ENCODE measurements at regions of chr3 and their contacts with region 1.

Region 1: DNA sequence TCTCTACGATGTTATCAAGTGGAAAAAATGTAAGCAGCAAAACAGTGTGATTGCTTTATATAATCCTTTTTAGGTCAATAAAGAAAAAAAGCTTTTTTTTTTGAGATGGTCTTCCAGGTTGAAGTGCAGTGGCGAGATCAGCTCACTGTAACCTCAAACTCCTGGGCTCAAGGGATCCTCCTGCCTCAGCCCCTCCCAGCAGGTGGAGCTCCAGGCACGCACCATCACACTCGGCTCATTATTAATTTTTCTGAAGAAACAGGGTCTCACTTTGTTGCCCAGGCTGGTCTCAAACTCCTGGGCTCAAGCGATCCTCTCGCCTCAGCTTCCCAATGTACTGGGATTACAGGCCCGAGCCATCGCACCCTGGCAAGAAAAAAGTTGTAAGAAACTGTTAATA is 17.3 kb downstream of the RNF168 start:
- DNase-seq: no peak
- ATAC-seq: no peak
- H3K4me3 Mint-ChIP-seq: no peak overlapping the region
- H3K27ac Mint-ChIP-seq: no peak overlapping the region
- H3K4me1 Mint-ChIP-seq: peaks cover 5% of the 10 kb centered on the region
- H3K27me3 Mint-ChIP-seq: no peaks in the 10 kb centered on the region

Region 2: DNA sequence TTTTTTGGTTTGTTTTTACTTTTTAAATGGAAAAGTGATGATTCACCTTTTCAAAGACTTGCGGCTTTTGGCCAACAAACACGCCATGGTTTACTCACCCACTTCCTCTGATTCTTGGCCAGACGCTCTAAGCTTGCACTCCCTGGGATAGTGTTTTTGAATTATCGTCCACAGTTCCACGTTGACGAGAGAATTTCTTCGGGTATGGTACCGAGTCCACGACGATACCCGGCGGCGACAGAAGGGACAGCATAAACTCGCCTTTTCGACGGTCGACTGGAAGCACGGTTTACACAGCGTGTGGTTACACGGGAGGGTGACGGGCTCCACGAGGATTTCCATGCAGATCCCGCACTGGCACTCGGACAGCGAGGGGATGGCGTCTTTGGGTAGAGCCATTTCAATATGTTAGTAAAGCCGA is 16.5 kb after region 1 on chr3:
- CTCF ChIA-PET with region 1: no interaction called
- POLR2A ChIA-PET with region 1: no interaction called
- DNase-seq: peak; percentile 82
- ATAC-seq: peak; percentile 54
- H3K4me3 Mint-ChIP-seq: peak overlapping the region; percentile 93
- H3K27ac Mint-ChIP-seq: peak overlapping the region; percentile 95
- H3K4me1 Mint-ChIP-seq: peaks cover 31% of the 10 kb centered on the region
- H3K27me3 Mint-ChIP-seq: peaks cover 8% of the 10 kb centered on the region

Region 3: GRCh38 chr3:196518966-196519717 is 32.9 kb after region 1 on chr3:
- CTCF ChIA-PET with region 1: interaction called, 22 read pairs
- POLR2A ChIA-PET with region 1: no interaction called
- DNase-seq: peak; percentile 75
- ATAC-seq: peak; percentile 55
- H3K4me3 Mint-ChIP-seq: no peak overlapping the region
- H3K27ac Mint-ChIP-seq: no peak overlapping the region
- H3K4me1 Mint-ChIP-seq: no peaks in the 10 kb centered on the region
- H3K27me3 Mint-ChIP-seq: peaks cover 2% of the 10 kb centered on the region

Region 4: DNA sequence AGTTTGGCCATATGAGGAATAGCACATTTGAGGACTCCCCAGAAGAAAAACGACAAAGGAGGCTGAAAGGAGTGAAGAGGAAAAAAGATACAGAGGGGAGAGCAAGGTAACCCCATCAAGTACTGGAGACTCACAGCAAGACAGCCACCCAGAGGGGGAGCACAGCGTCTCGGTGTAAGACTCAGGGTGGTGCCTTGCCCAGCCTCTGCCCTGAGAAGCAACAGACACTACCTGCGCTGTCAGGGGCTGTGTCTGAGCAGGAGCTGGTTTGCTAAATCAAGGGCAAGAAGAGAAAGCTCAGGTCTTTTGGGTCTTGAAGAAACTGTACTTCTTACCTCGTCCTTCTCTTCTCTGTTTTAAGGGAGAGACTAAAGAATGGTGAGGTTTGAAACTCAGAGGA is 110.1 kb after region 1 on chr3:
- CTCF ChIA-PET with region 1: no interaction called
- POLR2A ChIA-PET with region 1: no interaction called
- DNase-seq: no peak
- ATAC-seq: no peak
- H3K4me3 Mint-ChIP-seq: no peak overlapping the region
- H3K27ac Mint-ChIP-seq: no peak overlapping the region
- H3K4me1 Mint-ChIP-seq: peaks cover 10% of the 10 kb centered on the region
- H3K27me3 Mint-ChIP-seq: peaks cover 28% of the 10 kb centered on the region

Region 5: DNA sequence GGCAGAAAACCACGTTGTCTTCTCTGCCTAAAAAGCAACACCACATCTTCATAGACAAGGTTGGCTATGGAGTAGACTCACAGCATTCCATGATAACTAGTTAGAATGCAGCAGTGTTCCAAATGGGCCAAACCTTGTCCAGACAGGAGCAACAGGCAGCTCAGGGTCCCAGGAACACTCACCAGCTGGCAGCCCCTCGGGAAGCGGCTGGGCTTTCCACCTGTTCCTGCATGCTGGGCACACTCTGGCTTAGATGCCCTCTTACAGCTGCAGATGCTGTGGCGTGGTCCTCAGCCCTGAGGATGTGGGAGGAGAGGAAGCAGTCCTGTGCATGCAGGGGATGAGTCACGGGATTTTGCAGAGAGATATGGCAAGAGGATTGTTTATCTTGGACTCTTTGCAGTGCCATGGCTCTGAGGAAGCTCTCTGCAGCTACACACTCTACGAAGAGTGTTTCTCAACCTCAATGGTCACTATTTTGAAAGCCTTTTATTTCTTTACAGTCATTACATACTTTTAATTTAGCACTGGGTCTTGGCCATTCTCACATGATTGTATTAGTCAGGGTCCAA is 164.6 kb after region 1 on chr3:
- CTCF ChIA-PET with region 1: no interaction called
- POLR2A ChIA-PET with region 1: no interaction called
- DNase-seq: no peak
- ATAC-seq: no peak
- H3K4me3 Mint-ChIP-seq: no peak overlapping the region
- H3K27ac Mint-ChIP-seq: no peak overlapping the region
- H3K4me1 Mint-ChIP-seq: peaks cover 54% of the 10 kb centered on the region
- H3K27me3 Mint-ChIP-seq: no peaks in the 10 kb centered on the region